GM12878 (cell line): ENCODE measurements at regions of chr11 and their contacts with region 1.

Region 1: DNA sequence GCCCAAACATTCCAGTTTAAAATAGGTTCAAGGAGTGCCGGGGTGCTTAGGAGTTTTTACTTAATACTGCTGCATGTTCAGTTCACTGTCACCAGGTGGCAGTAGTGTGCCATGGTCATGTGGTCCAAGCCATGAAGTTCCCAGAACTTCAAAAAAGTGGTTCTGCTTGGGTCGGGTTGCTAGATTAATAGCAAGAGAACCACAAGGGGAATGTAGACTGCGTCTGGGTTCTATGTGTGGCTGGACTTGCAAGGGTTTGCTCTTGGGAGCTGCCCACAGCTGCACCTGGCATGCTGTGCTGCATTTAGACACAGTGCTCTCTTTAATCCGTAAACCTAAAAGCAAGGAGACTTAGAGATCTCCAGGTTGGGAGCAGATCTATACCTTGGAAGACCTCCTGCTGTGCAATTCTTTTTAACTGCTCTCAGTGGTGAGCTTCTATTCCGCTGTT is 6.5 kb upstream of the SPON1 start:
- DNase-seq: no peak
- ATAC-seq: peak; percentile 77
- H3K4me3 ChIP-seq: no peak overlapping the region
- H3K27ac ChIP-seq: no peak overlapping the region
- H3K4me1 ChIP-seq: no peaks in the 10 kb centered on the region
- H3K27me3 ChIP-seq: peaks cover 0 to 1% of the 10 kb centered on the region in 2 experiments; a peak in 2 of 4 replicates
- CTCF ChIP-seq: peak; percentile 80 to 83 (median 81)
- EP300 ChIP-seq: no peak
- POLR2A ChIP-seq: no peak
- RAD21 ChIP-seq: peak; percentile 80

Region 2: GRCh38 chr11:13983081-13983751 is 27.2 kb after region 1 on chr11:
- CTCF ChIA-PET with region 1: no interaction called
- POLR2A ChIA-PET with region 1: no interaction called
- RAD21 ChIA-PET with region 1: no interaction called
- SMC1A ChIA-PET with region 1: no interaction called
- in situ Hi-C with region 1: no loop called
- intact Hi-C with region 1: no loop called
- DNase-seq: no peak
- ATAC-seq: no peak
- H3K4me3 ChIP-seq: no peak overlapping the region
- H3K27ac ChIP-seq: no peak overlapping the region
- H3K4me1 ChIP-seq: no peaks in the 10 kb centered on the region
- H3K27me3 ChIP-seq: no peaks in the 10 kb centered on the region
- CTCF ChIP-seq: no peak
- EP300 ChIP-seq: no peak
- POLR2A ChIP-seq: no peak
- RAD21 ChIP-seq: no peak

Region 3: DNA sequence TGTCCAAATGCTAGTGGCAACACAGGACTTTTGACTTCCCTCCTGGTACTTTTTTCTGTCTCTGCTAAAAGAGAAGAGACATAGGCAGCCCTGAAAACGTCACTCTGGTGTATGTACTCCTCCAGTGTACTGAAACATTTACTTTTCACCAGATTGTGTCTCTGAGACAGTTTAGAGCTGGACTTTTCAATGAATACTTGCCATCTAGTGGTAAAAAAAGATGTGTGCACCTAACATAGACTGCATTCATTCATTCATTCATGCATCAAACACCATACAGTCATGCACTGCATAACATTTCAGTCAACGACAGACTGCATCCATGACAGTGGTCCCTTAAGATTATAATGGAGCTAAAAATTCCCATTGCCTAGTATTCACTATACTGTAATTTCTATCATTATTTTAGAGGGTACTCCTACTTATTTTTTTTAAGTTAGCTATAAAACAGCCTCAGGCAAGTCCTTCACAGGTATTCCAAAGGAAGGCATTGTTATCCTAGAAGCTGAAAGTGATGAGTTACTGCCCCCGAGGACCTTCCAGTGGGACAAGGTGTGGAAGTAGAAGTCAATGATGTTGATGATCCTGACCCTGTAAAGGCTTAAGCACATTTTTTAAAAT is 192.8 kb after region 1 on chr11:
- CTCF ChIA-PET with region 1: interaction called, 13 read pairs
- POLR2A ChIA-PET with region 1: no interaction called
- RAD21 ChIA-PET with region 1: no interaction called
- SMC1A ChIA-PET with region 1: no interaction called
- in situ Hi-C with region 1: no loop called
- intact Hi-C with region 1: loop called (anchors 5 kb)
- DNase-seq: no peak
- ATAC-seq: peak; percentile 81
- H3K4me3 ChIP-seq: no peak overlapping the region
- H3K27ac ChIP-seq: no peak overlapping the region
- H3K4me1 ChIP-seq: no peaks in the 10 kb centered on the region
- H3K27me3 ChIP-seq: no peaks in the 10 kb centered on the region
- CTCF ChIP-seq: peak; percentile 37 to 57 (median 47); a peak in 5 of 6 replicates
- EP300 ChIP-seq: no peak
- POLR2A ChIP-seq: no peak
- RAD21 ChIP-seq: peak; percentile 36; the same call in 1 of the 2 replicates

Region 4: DNA sequence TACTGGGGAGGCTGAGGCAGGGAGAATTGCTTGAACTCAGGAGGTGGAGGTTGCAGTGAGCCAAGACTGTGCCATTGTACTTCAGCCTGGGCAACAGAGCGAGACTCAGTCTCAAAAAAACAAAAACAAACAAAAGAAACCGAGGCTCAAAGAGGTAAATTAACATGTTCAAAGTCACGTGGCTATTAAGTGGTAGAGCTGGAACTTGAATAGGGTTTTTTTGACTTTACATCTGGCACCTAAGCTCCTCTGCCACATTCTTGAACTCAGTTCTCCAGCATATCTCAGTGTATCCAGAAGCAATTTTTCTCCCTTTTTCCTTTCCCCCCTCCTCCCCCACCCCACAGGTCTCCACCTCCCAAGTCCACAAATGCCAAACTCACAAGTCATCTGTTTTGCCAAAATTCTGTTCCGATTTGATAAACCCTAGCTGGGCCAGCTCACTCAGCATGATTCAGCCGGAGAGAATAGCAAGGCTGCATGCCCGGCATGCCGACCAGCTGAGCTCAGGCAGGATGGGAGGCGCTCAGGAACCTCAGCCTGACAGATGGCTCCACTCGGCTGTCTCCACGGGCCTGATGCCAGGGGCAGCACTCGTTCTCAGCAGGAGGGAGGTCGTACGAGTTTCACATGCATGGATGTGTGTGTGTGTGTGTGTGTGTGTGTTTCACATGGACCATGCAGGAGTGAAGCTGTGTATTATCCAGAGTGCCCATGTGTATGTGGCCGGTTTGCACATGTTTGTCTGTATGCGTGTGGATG is 466.2 kb after region 1 on chr11:
- CTCF ChIA-PET with region 1: no interaction called
- POLR2A ChIA-PET with region 1: no interaction called
- RAD21 ChIA-PET with region 1: interaction called, 3 read pairs
- SMC1A ChIA-PET with region 1: no interaction called
- in situ Hi-C with region 1: loop called (anchors 25 kb)
- intact Hi-C with region 1: no loop called
- DNase-seq: no peak
- ATAC-seq: no peak
- H3K4me3 ChIP-seq: no peak overlapping the region
- H3K27ac ChIP-seq: no peak overlapping the region
- H3K4me1 ChIP-seq: no peaks in the 10 kb centered on the region
- H3K27me3 ChIP-seq: no peaks in the 10 kb centered on the region
- CTCF ChIP-seq: no peak
- EP300 ChIP-seq: no peak
- POLR2A ChIP-seq: no peak
- RAD21 ChIP-seq: no peak